HAP-1 (cell line): ENCODE measurements at regions of chr1 and their contacts with region 1.

Region 1: DNA sequence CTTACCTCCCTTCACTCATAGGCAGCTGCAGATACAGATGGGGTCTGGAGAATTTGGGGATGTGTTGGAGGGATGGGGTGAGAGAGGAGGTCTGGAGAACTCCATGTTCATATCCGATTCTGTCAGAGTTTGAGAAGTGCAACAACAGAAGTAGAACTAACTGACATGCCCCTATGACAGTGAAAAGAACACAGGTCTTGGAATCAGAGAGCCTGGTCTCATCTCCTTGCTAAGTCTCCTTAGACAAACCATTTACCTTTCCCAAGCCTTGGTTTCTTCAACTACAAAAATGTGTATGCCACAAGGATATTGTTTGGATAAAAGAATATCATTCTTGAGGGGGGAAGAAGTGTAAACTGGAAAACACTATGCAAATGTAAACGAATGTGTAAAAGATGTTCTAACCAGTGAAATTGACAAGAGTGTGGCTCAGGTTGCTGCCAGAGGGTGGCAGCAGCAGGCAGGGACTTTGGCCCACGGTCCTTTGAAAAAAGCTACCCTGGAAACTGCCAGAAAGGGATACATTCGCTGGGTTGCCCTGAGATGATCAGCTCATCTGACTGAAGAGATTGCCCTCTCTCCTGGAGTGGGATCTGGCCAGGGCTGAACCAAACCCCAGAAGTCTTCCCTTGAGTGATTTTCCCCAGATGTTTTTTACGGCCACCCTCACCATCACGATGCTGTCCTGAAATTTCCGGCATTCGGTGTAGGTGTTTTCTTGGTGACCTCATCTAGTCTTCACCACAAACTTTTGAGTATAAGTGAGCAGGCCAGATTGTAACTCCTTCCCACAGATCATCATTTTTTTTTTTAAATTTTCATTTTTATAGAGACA is 17.0 kb upstream of the CD2 start:
- DNase-seq: peak; percentile 59 to 74
- H3K4me3 ChIP-seq: no peak overlapping the region
- H3K4me1 ChIP-seq: no peaks in the 10 kb centered on the region
- H3K27me3 ChIP-seq: no peaks in the 10 kb centered on the region

Region 2: DNA sequence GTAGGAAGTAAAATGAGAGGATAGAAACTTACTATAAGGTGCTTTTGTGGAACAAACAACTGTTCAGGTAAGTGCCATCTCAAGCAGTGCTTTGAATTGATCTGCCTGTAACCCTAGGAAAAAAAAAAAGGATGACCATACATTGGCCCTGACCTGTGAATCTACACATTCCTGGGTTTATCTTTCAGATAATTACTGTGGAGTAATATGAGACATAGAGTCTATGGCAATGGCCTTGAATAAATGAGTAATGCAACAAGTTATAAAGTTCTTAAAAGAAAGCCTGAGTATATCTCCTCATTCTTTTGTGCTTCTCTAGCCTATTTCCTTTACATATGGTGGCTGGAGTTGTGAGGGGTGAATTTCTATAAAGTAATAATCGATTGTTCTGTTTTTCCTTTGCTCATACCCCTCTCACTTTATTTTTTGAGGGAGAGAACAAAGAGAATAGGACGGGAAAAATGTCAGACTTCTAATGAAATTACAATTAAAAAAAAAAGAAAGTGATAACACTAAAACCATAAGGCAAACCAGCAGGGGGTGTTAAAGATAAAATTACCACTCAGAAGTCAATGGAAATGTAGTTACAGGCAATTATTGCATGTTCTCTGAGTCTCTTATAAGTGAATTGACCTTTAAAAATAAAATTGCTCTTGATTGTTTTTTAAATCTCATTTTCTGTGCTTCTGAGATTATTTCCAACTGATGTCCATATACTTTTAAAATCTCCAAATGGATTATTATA is 376.6 kb before region 1 on chr1:
- in situ Hi-C with region 1: no loop called
- DNase-seq: no peak
- H3K4me3 ChIP-seq: no peak overlapping the region
- H3K4me1 ChIP-seq: peaks cover 14% of the 10 kb centered on the region
- H3K27me3 ChIP-seq: no peaks in the 10 kb centered on the region

Region 3: GRCh38 chr1:116817582-116818064 is 80.4 kb after region 1 on chr1:
- in situ Hi-C with region 1: loop called (anchors 5 kb)
- DNase-seq: peak; percentile 47 to 79
- H3K4me3 ChIP-seq: no peak overlapping the region
- H3K4me1 ChIP-seq: no peaks in the 10 kb centered on the region
- H3K27me3 ChIP-seq: no peaks in the 10 kb centered on the region

Region 4: DNA sequence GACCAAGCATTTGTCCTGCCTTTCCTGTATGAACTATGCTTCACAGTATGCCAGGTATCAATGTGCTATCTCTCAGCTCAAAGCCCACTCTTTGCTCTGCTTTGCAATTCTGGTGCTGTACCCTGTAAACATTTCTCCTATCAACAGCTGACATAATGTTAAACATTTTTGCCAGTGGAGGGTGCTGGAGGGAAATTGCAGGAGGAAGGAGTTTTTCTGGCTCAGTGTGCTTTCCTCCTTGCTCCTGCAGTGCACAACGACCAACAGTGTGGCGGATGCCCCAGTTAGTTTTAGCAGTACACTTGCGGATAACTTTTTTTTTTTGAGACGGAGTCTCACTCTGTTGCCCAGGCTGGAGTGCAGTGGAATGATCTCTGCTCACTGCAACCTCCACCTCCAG is 105.4 kb after region 1 on chr1:
- in situ Hi-C with region 1: no loop called
- DNase-seq: no peak
- H3K4me3 ChIP-seq: no peak overlapping the region
- H3K4me1 ChIP-seq: no peaks in the 10 kb centered on the region; the same call in 1 of the 2 replicates
- H3K27me3 ChIP-seq: no peaks in the 10 kb centered on the region

Region 5: GRCh38 chr1:117009132-117009531 is 271.9 kb after region 1 on chr1:
- in situ Hi-C with region 1: no loop called
- DNase-seq: no peak
- H3K4me3 ChIP-seq: no peak overlapping the region
- H3K4me1 ChIP-seq: peaks cover under 1% of the 10 kb centered on the region; the same call in 1 of the 2 replicates
- H3K27me3 ChIP-seq: no peaks in the 10 kb centered on the region

Region 6: DNA sequence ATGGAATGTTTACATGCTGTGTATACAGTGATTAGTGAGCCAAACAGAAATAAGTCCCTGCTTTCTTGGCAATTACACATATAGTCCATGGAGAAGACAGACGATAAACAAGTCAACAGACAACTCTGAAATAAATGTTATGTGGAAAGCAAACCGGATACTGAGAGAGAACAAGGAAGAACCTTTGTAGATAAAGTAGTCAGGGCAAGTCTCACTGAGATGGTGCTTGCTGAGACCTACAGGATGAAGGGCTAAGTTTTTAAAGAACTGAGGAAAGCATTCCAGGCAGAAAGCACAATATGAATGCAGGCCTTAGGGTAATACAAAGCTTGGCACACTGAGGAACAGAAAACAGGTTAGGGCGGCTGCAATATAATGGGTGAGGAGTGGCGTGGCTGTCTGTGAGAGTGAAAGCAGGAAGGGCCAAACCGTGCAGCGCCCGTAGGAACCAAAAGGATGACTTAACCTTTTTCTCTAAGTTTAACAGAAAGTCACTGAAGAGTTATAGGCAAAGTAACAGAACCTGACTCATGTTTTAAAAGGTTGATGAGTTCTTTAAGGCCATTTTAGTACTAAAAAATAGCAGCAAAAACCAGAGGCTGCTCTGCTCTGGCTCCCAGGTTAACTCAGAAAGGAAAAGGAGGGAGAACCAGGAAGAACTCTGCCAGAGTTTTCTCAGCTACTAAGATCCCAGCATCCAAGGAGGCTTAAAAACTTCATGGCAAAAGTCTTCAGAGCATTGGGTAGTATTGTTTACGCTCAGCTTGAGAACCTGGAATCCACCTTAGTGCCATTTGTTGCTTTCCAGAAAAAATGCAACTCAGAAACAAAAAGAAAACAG is 314.2 kb after region 1 on chr1:
- in situ Hi-C with region 1: loop called (anchors 5 kb)
- DNase-seq: no peak
- H3K4me3 ChIP-seq: no peak overlapping the region
- H3K4me1 ChIP-seq: no peaks in the 10 kb centered on the region
- H3K27me3 ChIP-seq: no peaks in the 10 kb centered on the region

Region 7: DNA sequence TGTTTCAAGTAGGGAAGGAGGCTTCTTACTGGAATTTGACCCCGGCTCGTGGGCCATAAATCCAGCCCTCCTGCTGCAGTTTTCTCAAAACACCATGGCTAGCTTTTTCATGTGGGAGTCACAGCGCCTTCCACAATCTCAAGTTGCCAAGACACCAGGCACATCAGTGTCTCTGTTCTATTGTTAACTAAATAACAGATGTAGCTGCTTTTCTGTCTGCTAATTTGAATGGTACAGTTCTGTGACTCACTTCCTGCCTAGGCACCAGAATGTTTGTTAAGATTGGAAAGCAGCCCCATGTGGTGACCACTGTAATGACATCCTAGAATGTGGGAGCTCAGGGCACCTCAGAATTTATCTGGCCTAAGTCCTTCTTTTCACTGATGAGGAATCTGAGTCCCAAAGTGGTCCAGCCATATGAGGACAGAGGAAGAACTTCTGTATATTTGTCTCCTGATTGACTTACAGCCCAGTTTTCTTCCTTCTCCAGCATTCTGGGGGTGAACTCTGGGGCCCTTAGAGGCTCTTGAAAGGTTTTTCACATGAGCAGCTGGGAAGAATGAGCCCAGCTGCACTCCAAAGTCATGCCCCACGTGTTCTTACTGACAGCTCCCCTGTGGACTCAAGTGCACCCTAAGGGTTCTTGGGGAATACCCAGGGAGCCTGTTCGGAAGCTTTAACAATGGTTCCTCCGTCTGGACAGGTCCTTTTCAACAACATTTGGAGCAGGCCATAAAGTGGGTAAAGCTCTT is 356.8 kb after region 1 on chr1:
- in situ Hi-C with region 1: no loop called
- DNase-seq: no peak
- H3K4me3 ChIP-seq: no peak overlapping the region
- H3K4me1 ChIP-seq: no peaks in the 10 kb centered on the region; the same call in 1 of the 2 replicates
- H3K27me3 ChIP-seq: no peaks in the 10 kb centered on the region